ENCODE measurements at regions of chr16 and their contacts with region 1.

Region 1: DNA sequence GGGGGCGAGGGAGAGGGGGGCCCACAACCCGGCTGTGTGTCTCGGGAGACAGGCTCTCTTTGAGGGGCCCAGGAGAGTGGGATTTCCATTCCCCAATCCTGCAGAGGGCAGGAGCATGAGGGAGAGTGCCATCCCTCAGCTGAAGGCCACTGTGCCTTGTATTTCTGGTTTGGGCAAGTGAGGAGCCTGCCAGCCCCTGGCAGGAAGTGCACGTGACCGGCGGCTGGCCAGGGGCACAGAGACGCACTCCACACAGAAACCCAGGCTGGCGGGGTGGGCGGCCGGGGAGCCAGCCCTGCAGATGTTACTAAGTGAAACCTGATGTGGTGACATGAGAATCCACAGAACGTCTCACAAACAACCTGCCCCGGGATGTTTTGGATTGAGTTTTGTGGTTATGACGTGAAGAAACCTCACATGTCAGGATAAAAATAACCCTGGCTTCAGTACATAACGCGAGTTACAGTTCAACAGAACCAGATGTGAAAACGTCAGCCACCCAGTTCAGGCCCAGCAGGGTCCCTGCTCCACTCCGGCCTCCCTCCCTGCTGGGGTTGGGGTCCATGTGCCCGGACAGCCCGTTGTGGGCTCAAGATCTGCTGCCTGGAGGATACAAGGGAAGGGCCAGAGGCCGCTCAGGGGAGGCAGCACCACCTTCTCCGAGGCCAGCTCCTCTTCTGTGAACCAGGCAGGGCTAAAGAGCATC is 51.7 kb upstream of the MTSS2 start:
- DNase-seq: peak; percentile 70 to 96 (median 94)
- H3K4me3 ChIP-seq: peak overlapping the region in 2 of 7 experiments; percentile 33 to 36
- H3K27ac ChIP-seq: peak overlapping the region; percentile 55 to 67
- H3K4me1 ChIP-seq: peaks cover 0 to 58% (median 46%) of the 10 kb centered on the region in 4 experiments
- H3K27me3 ChIP-seq: no peaks in the 10 kb centered on the region

Region 2: DNA sequence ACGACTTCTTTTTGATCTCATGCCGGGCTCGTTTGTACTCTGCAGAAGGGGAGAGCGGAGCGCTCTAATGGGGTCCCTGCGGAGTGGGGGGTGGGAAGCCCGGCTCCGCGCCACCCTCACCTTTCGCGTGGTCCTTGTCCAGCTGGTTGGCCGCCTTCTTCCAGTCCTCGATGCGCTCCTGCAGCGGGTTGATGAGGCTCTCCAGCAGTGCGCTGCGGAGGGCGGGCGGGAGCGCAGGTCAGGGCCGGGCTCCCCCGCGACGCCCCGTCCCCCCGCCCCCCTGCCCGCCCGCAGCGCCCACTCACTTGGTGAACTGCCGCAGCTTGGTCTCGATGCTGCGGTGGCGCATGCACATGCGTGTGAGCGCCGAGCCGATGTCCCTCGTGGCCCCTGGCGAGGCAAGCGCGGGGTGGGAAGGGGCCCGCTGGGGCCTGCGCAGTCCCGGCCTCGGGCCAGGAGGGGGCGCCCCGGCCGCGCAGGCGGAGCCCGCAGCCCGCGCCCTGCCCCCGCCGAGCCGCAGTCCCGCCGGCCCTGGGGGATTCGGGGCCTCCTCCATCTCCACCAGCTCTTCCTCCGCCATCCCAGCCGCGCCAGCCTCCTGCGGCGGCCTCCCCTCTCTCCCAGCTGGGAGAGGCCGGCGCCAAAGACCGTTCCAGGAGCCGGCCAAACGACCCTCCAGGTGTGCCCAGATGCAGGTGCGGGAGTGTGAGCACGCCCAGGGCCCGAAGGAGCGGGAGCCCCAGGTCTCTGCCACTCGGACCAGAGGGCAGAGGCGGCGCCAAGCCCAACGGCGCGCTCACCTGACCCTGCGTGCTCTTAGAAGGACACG is 57.6 kb before region 1 on chr16:
- CTCF ChIA-PET with region 1: interaction called, 13 read pairs
- POLR2A ChIA-PET with region 1: interaction called, 4 read pairs
- DNase-seq: peak in 2 of 3 donors; percentile 23
- H3K4me3 ChIP-seq: no peak overlapping the region
- H3K27ac ChIP-seq: no peak overlapping the region
- H3K4me1 ChIP-seq: peaks cover 0 to 19% (median 18%) of the 10 kb centered on the region in 4 experiments
- H3K27me3 ChIP-seq: no peaks in the 10 kb centered on the region

Region 3: GRCh38 chr16:70685938-70686375 is 51.6 kb before region 1 on chr16 and contains the start of gene MTSS2:
- CTCF ChIA-PET with region 1: interaction called, 10 read pairs
- POLR2A ChIA-PET with region 1: interaction called, 4 read pairs
- DNase-seq: peak; percentile 65 to 86 (median 79)
- H3K4me3 ChIP-seq: peak within 1 kb of the TSS; percentile 15 to 80 (median 71)
- H3K27ac ChIP-seq: no peak within 1 kb of the TSS
- H3K4me1 ChIP-seq: peaks cover 0 to 47% (median 34%) of the 10 kb centered on the region in 4 experiments
- H3K27me3 ChIP-seq: no peaks in the 10 kb centered on the region

Region 4: DNA sequence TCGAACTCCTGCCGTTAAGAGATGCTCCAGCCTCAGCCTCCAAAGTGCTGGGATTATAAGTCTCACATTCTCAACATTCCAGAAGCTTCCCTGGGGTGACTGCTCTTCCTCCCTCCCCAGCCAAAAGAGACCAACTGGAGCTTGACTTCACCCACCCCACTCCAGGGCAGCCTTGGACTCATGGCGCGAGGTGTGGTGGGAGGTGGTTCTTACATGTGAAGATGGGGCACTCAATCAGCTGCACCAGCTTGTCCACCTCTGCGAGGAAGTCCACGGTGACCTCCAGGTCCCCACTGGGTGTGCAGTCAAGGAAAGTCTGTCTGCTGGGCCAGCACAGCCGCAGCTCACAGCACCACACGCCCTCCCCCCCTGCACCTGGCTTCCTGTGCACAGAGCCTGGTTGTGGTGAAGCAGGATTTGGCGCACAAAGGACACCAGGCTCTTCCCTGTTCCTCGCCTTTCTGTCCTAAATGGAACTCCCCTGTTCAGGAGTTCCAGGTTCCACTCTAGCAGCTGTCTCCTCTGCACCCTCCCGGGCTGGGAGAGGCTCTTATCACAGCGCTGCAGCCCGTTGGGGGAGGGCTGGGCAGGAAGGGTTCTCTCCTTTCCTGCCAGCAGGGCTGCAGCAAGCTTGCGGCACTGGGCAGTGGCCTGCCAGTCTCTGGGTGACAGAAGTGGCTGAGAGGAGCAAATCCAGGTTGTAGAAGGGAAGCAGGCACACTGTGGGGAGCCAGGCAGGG is 42.0 kb before region 1 on chr16:
- CTCF ChIA-PET with region 1: interaction called, 16 read pairs
- POLR2A ChIA-PET with region 1: no interaction called
- DNase-seq: peak; percentile 72 to 95 (median 89)
- H3K4me3 ChIP-seq: peak overlapping the region in 4 of 7 experiments; percentile 15 to 49 (median 44)
- H3K27ac ChIP-seq: peak overlapping the region; percentile 14 to 73
- H3K4me1 ChIP-seq: peaks cover 0 to 67% (median 56%) of the 10 kb centered on the region in 4 experiments
- H3K27me3 ChIP-seq: no peaks in the 10 kb centered on the region

Region 5: GRCh38 chr16:70703041-70703834 is 34.3 kb before region 1 on chr16:
- CTCF ChIA-PET with region 1: interaction called, 13 read pairs
- POLR2A ChIA-PET with region 1: interaction called, 3 read pairs
- DNase-seq: peak in 2 of 3 donors; percentile 24 to 42
- H3K4me3 ChIP-seq: no peak overlapping the region
- H3K27ac ChIP-seq: no peak overlapping the region
- H3K4me1 ChIP-seq: peaks cover 0 to 58% (median 26%) of the 10 kb centered on the region in 4 experiments
- H3K27me3 ChIP-seq: no peaks in the 10 kb centered on the region

Region 6: GRCh38 chr16:70750893-70751475 is 13.5 kb after region 1 on chr16:
- CTCF ChIA-PET with region 1: interaction called, 36 read pairs
- POLR2A ChIA-PET with region 1: interaction called, 5 read pairs
- DNase-seq: peak in 2 of 3 donors; percentile 72 to 77
- H3K4me3 ChIP-seq: peak overlapping the region in 1 of 7 experiments; percentile 27
- H3K27ac ChIP-seq: peak overlapping the region; percentile 27 to 50
- H3K4me1 ChIP-seq: peaks cover 0 to 59% (median 48%) of the 10 kb centered on the region in 4 experiments
- H3K27me3 ChIP-seq: no peaks in the 10 kb centered on the region

Region 7: DNA sequence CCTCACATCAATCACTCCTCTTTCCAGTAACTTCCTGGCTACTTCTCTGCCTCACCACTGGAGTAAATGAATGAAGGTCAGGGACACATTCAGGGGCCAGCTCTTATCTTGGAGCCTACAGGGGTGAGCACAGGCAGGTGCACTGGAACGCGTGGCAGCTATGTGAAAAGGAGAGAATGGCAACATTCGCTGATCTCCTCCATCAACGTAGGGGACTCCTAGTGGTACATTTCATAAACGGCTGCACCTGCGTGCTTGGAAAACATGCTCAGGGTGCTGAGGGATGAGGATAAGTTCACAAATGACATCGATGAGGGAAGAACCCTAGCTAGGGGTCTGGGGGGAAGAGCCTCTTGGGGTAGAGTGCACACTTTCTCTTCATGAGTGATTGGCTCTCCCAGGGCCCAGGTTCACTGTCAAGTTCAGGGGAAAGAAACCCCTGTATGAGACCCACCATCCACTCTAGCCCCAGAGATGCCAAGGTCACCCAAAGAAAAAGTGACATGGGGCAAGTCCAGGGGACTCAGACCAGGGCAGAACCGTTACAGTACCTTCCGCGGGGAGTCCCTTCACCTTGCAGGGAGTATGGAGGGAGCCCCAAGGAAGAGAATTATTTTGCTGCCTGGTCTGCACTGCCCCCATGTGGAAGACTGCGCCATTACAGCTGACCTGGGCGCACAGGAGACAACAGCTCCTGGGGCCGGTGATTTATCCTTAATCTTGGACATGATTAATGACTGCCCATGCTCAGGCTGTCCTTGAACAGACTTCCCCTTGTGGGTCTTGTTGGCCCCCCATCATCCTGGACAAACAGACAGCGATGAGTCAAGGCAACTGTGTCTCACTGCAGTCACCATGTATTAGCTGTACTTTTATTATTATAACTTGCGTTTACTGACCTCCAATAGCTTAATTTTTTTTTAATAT is 33.4 kb after region 1 on chr16:
- CTCF ChIA-PET with region 1: interaction called, 21 read pairs
- POLR2A ChIA-PET with region 1: no interaction called
- DNase-seq: peak; percentile 40 to 70 (median 69)
- H3K4me3 ChIP-seq: peak overlapping the region in 1 of 7 experiments; percentile 11
- H3K27ac ChIP-seq: no peak overlapping the region
- H3K4me1 ChIP-seq: peaks cover 0 to 4% (median 0%) of the 10 kb centered on the region in 4 experiments
- H3K27me3 ChIP-seq: no peaks in the 10 kb centered on the region

Measured in common myeloid progenitor, CD34-positive (primary cell).